Mammary epithelial cell (primary cell): ENCODE measurements at regions of chr16 and their contacts with region 1.

Region 1: DNA sequence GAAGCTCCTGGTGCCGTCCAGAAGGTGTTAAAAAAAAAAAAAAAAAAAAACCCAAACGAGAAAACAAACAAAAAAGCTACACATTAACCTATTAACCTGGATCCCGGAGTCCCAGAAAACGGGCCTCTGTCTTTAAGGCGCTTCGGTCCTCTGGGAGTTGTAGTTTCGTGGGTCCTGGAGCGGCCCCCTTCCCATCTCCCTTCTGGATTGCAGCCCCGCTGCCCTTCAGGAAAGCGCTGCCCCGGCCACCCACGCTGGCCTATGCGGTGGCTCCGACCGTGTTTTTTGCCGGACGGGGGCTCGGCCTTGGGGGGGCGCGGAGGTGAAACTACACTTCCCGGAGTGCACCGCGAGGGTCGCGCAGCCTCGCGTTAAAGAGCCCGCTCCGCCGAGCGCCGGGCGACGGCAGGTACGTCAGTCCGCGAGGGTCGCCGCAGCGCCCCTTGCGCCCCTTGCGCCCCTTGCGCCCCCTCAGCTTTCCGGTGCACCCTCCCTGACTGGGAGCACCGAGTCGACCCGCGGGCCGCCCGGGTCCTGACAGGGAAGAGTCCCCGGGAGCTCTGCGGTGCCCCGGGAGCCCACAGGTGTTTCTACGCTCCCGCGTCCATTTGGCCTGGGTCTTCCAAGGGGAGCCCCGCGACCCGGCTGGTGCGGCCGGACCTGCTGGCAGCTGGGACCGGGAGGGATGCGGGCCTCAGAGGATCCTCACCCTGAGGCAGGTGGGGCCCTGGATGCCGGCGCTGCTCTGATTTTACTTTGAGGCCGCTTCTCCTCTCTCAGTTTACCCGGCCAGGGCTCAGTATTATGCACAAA is at the start of gene FCSK:
- DNase-seq: peak; percentile 67
- H3K4me3 ChIP-seq: peak within 1 kb of the TSS; percentile 71 to 96 (median 75)
- H3K27ac ChIP-seq: peak within 1 kb of the TSS; percentile 93
- H3K4me1 ChIP-seq: peaks cover 5% of the 10 kb centered on the region
- H3K27me3 ChIP-seq: no peaks in the 10 kb centered on the region
- CTCF ChIP-seq: no peak
- total RNA-seq, gene FCSK: 12.2 to 12.7 TPM

Region 2: DNA sequence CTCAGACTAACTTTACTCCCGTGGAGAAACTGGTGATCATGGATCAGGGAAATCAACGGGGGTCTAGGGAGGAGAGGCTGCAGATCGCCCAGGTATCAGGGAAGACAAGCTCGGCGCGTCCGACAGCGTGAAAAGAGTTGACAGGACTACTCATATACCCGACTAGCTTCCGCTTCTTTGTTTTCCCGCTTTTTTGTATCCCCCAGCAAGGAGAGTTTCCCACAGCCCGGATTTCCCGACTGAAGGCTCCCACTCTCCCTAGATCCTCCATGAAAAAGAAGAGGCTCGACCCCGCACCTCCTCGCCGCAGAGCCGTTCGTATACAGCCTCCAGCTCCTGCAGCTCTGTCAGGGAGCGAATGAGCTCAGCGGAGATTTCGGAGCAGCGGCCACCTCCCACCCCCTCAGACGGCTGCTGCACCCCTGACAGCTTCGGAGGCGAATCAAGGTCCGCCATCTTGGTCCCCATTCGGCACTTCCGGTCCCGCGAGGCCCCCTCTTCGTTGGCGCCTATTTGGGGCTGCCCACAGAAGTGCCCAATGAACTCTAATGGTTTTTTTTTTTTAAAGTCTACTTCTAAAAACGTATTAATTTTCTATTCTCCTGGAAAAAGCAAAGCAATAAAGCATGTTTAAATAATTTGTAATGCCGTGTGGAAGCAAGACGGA is 68.8 kb after region 1 on chr16 and contains the start of gene COG4:
- CTCF ChIA-PET with region 1: interaction called, 9 read pairs
- dilution Hi-C with region 1: no loop called
- in situ Hi-C with region 1: no loop called
- intact Hi-C with region 1: loop called (anchors 1 kb)
- DNase-seq: peak; percentile 77
- H3K4me3 ChIP-seq: peak within 1 kb of the TSS; percentile 90 to 97 (median 93)
- H3K27ac ChIP-seq: peak within 1 kb of the TSS; percentile 83
- H3K4me1 ChIP-seq: peaks cover 35% of the 10 kb centered on the region
- H3K27me3 ChIP-seq: no peaks in the 10 kb centered on the region
- CTCF ChIP-seq: no peak
- total RNA-seq, gene COG4: 42.7 to 52.0 TPM